ENCODE measurements at regions of chr12 and their contacts with region 1.

Region 1: GRCh38 chr12:3988519-3989448 is 115.6 kb upstream of the PARP11 start:
- DNase-seq: peak; percentile 49
- H3K4me3 Mint-ChIP-seq: peak overlapping the region; percentile 16
- H3K27ac Mint-ChIP-seq: peak overlapping the region; percentile 90
- H3K4me1 Mint-ChIP-seq: peaks cover 25% of the 10 kb centered on the region
- H3K27me3 Mint-ChIP-seq: peaks cover 2% of the 10 kb centered on the region

Region 2: GRCh38 chr12:3964439-3964838 is 24.3 kb before region 1 on chr12:
- CTCF ChIA-PET with region 1: interaction called, 10 read pairs
- POLR2A ChIA-PET with region 1: no interaction called
- DNase-seq: no peak
- H3K4me3 Mint-ChIP-seq: no peak overlapping the region
- H3K27ac Mint-ChIP-seq: no peak overlapping the region
- H3K4me1 Mint-ChIP-seq: peaks cover 27% of the 10 kb centered on the region
- H3K27me3 Mint-ChIP-seq: no peaks in the 10 kb centered on the region